Heart left ventricle (tissue), 16 donors: ENCODE measurements at regions of chr2 and their contacts with region 1.

Region 1: DNA sequence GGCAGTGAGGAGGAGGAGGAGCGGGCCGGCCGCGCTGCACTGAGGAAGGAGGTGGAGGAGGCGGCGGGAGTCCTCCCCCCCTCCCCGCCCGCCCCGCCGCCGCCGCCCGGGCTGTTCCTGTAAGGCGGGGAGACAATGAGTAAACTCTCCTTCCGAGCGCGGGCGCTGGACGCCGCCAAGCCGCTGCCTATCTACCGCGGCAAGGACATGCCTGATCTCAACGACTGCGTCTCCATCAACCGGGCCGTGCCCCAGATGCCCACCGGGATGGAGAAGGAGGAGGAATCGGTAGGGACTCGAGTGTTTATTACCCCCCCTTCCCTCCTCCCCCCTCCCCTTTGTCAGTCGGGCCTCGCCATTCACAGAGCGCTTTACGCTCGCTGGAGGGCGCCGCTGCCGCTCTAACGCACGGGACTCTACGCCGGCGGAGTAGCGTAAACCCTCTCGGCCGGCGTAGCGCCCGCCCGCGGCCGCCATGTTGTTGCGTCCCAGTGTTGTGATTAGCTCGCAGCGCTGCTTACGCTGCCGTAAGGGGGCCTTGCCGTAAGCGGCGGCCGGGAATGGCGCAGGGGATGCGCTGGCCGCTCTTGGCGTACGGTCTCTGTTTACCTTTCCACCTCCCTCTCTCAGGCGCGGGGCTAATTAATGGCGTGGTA is 460 bp downstream of the EPC2 start:
- DNase-seq: peak; percentile 93 to 97 (median 94)
- ATAC-seq: peak; percentile 87 to 93 (median 89)
- H3K4me3 ChIP-seq: peak overlapping the region; percentile 77 to 99 (median 90)
- H3K27ac ChIP-seq: peak overlapping the region; percentile 98 to 100 (median 100)
- H3K4me1 ChIP-seq: peaks cover 0 to 53% (median 24%) of the 10 kb centered on the region in 12 donors
- H3K27me3 ChIP-seq: no peaks in the 10 kb centered on the region
- CTCF ChIP-seq: peak in 8 of 12 donors; percentile 7 to 57 (median 30)
- POLR2A ChIP-seq: peak in 1 of 2 donors; percentile 16

Region 2: DNA sequence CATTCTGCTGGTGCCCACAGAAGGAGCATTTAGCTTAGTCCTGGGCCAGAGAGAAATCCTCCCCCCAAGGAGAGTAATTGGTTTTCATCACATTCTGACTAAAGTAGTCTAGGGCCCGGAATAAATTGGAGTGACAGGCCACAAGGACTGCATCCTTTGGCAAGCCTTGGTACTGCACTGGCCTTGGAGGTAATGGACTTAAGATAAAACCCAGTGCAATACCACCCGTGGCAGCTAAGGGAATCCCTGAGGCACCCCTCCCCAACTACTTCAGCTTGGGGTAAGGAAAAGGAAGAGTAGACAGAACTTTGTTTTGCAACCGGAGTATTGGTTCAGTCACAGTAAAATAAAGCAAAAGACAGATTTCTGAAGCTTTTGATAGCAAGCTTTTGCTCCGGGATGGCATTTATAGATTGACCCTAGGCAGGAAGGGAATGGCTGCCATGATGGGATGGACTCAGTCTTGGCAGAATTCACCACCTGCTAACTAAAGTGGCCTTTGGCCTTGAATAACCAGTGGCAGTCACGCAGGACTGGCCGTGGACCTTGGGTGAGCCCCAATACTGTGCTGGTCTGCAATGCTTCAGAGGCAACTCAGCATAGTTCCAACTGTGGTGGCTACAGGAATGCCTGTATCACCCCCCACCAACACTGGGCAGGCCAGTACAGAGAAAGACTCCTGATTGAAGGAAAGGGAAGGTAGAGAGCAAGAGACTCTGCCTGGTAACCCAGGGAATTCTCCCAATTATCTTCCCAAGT is 638.6 kb before region 1 on chr2:
- intact Hi-C with region 1: loop called in 1 of 10 experiments (anchors 10 kb)
- DNase-seq: no peak
- ATAC-seq: no peak
- H3K4me3 ChIP-seq: no peak overlapping the region
- H3K27ac ChIP-seq: no peak overlapping the region
- H3K4me1 ChIP-seq: no peaks in the 10 kb centered on the region
- H3K27me3 ChIP-seq: no peaks in the 10 kb centered on the region
- CTCF ChIP-seq: no peak
- POLR2A ChIP-seq: no peak

Region 3: GRCh38 chr2:148603562-148603920 is 41.5 kb before region 1 on chr2:
- intact Hi-C with region 1: no loop called
- DNase-seq: no peak
- ATAC-seq: no peak
- H3K4me3 ChIP-seq: no peak overlapping the region
- H3K27ac ChIP-seq: no peak overlapping the region
- H3K4me1 ChIP-seq: no peaks in the 10 kb centered on the region
- H3K27me3 ChIP-seq: no peaks in the 10 kb centered on the region
- CTCF ChIP-seq: no peak
- POLR2A ChIP-seq: no peak

Region 4: DNA sequence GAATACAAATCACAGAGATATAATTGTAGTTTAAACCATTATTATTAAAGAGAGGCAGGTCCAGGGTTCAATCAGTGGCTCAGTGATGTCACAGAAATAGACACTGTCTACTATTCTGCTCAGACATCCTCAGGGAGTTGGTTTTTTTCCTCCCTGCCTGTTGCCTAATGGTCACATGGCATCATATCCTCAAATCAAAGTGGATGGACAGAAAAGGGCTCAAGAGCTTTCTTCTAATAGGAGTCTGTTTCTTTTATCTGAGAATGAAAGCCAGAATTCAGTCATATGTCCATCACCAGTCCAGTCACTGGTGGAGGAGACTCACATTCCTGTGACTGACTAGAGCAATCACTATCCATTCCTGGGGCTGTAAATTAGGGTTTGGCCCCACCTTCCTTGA is 28.3 kb before region 1 on chr2:
- intact Hi-C with region 1: loop called in 1 of 10 experiments (anchors 2 kb)
- DNase-seq: no peak
- ATAC-seq: no peak
- H3K4me3 ChIP-seq: no peak overlapping the region
- H3K27ac ChIP-seq: peak overlapping the region in 2 of 12 donors; percentile 55 to 74
- H3K4me1 ChIP-seq: peaks cover 0 to 50% (median 29%) of the 10 kb centered on the region in 12 donors
- H3K27me3 ChIP-seq: no peaks in the 10 kb centered on the region
- CTCF ChIP-seq: no peak
- POLR2A ChIP-seq: no peak

Region 5: DNA sequence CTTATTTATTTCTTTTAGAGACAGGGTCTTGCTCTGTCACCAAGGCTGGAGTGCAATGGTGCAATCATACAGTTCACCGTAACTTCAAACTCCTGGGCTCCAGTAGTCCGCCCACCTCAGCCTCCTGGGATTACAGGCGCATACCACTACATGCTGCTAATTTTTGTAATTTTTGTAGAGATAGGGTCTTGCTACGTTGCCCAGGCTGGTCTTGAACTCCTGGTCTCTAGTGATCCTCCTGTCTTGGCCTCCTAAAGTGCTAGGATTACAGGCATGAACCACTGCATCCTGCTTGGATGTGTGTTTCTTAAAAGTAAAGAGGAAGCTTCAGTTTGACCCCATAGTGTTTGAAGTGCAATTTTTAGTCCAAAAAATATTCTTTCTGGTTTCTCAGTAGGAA is 125.0 kb after region 1 on chr2:
- intact Hi-C with region 1: loop called in 2 of 10 experiments (anchors 10 kb)
- DNase-seq: no peak
- ATAC-seq: no peak
- H3K4me3 ChIP-seq: no peak overlapping the region
- H3K27ac ChIP-seq: no peak overlapping the region
- H3K4me1 ChIP-seq: no peaks in the 10 kb centered on the region
- H3K27me3 ChIP-seq: no peaks in the 10 kb centered on the region
- CTCF ChIP-seq: no peak
- POLR2A ChIP-seq: no peak

Region 6: DNA sequence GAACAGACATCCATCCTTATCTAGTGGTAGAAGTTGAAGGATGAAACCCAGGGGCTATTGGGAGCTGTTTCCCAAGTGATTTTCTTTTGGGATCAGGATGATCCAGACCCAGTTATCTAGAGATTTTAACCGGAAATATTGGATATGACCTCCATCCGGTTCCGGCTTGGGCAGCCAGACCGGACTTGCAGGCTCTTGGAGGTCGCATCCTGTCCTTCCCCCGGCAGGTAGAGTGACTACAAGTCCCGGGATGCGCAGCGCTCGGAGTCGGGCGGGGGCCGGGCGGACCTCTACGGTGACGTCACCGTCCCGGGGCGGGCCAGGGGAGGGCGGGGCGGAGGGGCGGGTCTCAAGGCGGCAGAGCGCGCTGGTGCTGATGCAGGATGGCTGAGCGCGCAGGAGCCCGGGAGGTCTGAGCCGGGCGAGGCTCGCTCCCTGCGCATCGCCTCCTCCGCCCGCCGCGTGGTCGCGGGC is 229.9 kb after region 1 on chr2 and contains the start of gene KIF5C:
- intact Hi-C with region 1: loop called in 3 of 10 experiments (anchors 5 to 10 kb)
- DNase-seq: peak; percentile 83 to 92 (median 83)
- ATAC-seq: peak; percentile 88 to 98 (median 96)
- H3K4me3 ChIP-seq: peak within 1 kb of the TSS; percentile 33 to 63 (median 52)
- H3K27ac ChIP-seq: no peak within 1 kb of the TSS
- H3K4me1 ChIP-seq: peaks cover 6 to 27% (median 19%) of the 10 kb centered on the region in 12 donors
- H3K27me3 ChIP-seq: peaks cover 15 to 60% (median 32%) of the 10 kb centered on the region in 9 donors
- CTCF ChIP-seq: no peak
- POLR2A ChIP-seq: no peak
- total RNA-seq, gene KIF5C: 0.22 to 1.4 (median 0.50) TPM

Region 7: GRCh38 chr2:148989882-148990493 is 345.0 kb after region 1 on chr2:
- intact Hi-C with region 1: loop called in 7 of 10 experiments (anchors 2 to 10 kb)
- DNase-seq: peak in 3 of 5 donors; percentile 48 to 55 (median 51)
- ATAC-seq: peak; percentile 61 to 92 (median 85)
- H3K4me3 ChIP-seq: no peak overlapping the region
- H3K27ac ChIP-seq: no peak overlapping the region
- H3K4me1 ChIP-seq: no peaks in the 10 kb centered on the region
- H3K27me3 ChIP-seq: no peaks in the 10 kb centered on the region
- CTCF ChIP-seq: peak; percentile 59 to 81 (median 75)
- POLR2A ChIP-seq: no peak